Activated CD4-positive, alpha-beta T cell treated with anti-CD3 and anti-CD28 coated beads for 36 hours (primary cell): ENCODE measurements at regions of chr20 and their contacts with region 1.

Region 1: GRCh38 chr20:33606118-33606771 is 55.9 kb upstream of the C20orf144 start:
- DNase-seq: no peak
- ATAC-seq: no peak
- H3K4me3 Mint-ChIP-seq: no peak overlapping the region
- H3K27ac Mint-ChIP-seq: no peak overlapping the region
- H3K4me1 Mint-ChIP-seq: peaks cover 18% of the 10 kb centered on the region
- H3K27me3 Mint-ChIP-seq: no peaks in the 10 kb centered on the region

Region 2: DNA sequence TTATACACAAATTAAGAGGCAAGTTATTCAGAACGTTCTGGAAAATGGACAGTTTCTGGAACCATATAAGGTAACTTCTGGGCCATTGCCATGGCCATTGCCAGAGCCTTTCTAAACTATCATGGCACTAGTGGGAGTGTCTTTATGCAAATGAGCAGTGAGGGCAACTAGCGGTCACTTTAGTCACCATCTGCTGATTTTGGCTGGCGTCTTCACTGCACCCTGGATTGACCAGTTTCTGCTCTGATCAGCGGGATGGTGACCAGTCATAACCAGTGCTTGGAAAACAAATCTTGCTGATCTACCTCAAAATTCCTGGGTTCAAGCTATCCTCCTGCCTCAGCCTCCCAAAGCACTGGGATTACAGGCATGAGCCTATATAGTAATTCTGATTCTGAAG is 155.4 kb before region 1 on chr20:
- CTCF ChIA-PET with region 1: no interaction called
- POLR2A ChIA-PET with region 1: no interaction called
- intact Hi-C with region 1: no loop called
- DNase-seq: no peak
- ATAC-seq: no peak
- H3K4me3 Mint-ChIP-seq: no peak overlapping the region
- H3K27ac Mint-ChIP-seq: no peak overlapping the region
- H3K4me1 Mint-ChIP-seq: no peaks in the 10 kb centered on the region
- H3K27me3 Mint-ChIP-seq: no peaks in the 10 kb centered on the region

Region 3: GRCh38 chr20:33653218-33653899 is 47.1 kb after region 1 on chr20:
- CTCF ChIA-PET with region 1: no interaction called
- POLR2A ChIA-PET with region 1: no interaction called
- intact Hi-C with region 1: loop called (anchors 1 to 5 kb)
- DNase-seq: peak; percentile 61
- ATAC-seq: peak; percentile 34
- H3K4me3 Mint-ChIP-seq: no peak overlapping the region
- H3K27ac Mint-ChIP-seq: peak overlapping the region; percentile 78
- H3K4me1 Mint-ChIP-seq: peaks cover 41% of the 10 kb centered on the region
- H3K27me3 Mint-ChIP-seq: no peaks in the 10 kb centered on the region